Left lung (tissue), 14 donors: ENCODE measurements at regions of chr7 and their contacts with region 1.

Region 1: GRCh38 chr7:142308326-142308725 is 50.5 kb upstream of the PRSS58 start:
- DNase-seq: no peak
- ATAC-seq: no peak
- H3K4me3 ChIP-seq: no peak overlapping the region
- H3K27ac ChIP-seq: no peak overlapping the region
- H3K4me1 ChIP-seq: no peaks in the 10 kb centered on the region
- H3K27me3 ChIP-seq: peaks cover 0 to 12% of the 10 kb centered on the region in 2 donors
- CTCF ChIP-seq: no peak

Region 2: GRCh38 chr7:142345811-142346210 is 37.5 kb after region 1 on chr7:
- intact Hi-C with region 1: loop called in 1 of 2 experiments (anchors 2 kb)
- DNase-seq: no peak
- ATAC-seq: no peak
- H3K4me3 ChIP-seq: no peak overlapping the region
- H3K27ac ChIP-seq: no peak overlapping the region
- H3K4me1 ChIP-seq: no peaks in the 10 kb centered on the region
- H3K27me3 ChIP-seq: peaks cover 0 to 12% of the 10 kb centered on the region in 2 donors
- CTCF ChIP-seq: no peak

Region 3: GRCh38 chr7:142496545-142497041 is 188.3 kb after region 1 on chr7:
- intact Hi-C with region 1: no loop called
- DNase-seq: peak in 1 of 4 donors; percentile 24
- ATAC-seq: peak; percentile 73
- H3K4me3 ChIP-seq: no peak overlapping the region
- H3K27ac ChIP-seq: no peak overlapping the region
- H3K4me1 ChIP-seq: peaks cover 0 to 12% of the 10 kb centered on the region in 2 donors
- H3K27me3 ChIP-seq: peaks cover 0 to 7% of the 10 kb centered on the region in 2 donors
- CTCF ChIP-seq: peak; percentile 52 to 57

Region 4: DNA sequence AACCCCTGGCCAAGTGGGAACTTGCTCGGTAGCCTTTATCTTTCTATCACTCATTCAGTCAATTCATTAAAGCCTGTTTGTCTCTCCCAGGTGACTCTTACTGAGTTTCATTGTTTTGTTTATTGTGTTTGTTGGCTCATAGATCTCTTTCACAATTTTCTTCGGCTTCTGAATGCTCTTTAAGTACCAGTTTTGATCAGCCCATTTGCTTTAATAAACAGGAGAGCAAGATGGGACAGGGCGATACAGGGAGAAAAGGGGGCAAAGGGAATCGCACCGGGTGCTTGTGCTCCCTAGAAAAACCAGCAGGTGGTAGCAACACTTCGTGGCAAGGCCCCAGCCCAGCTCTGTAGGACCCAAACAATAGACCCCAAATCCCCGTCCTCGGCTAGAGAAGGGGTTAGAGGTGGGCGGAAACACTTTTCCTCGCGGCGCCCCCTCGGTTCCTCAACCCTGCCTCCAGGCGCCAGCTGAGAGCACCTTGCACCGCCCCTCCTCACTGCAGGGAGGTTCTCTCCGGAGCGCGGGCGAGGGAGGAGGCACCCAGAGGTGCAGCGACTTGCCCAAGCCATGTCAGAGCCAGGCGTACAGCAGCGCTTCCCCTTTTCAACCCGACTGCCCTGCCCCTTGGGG is 545.5 kb after region 1 on chr7:
- intact Hi-C with region 1: no loop called
- DNase-seq: peak; percentile 68 to 94 (median 80)
- ATAC-seq: peak; percentile 85
- H3K4me3 ChIP-seq: peak overlapping the region; percentile 67 to 68
- H3K27ac ChIP-seq: peak overlapping the region; percentile 53 to 77
- H3K4me1 ChIP-seq: peaks cover 0 to 24% of the 10 kb centered on the region in 2 donors
- H3K27me3 ChIP-seq: peaks cover 0 to 12% of the 10 kb centered on the region in 2 donors
- CTCF ChIP-seq: peak; percentile 68 to 70